ENCODE measurements at regions of chr7 and their contacts with region 1.

Region 1: DNA sequence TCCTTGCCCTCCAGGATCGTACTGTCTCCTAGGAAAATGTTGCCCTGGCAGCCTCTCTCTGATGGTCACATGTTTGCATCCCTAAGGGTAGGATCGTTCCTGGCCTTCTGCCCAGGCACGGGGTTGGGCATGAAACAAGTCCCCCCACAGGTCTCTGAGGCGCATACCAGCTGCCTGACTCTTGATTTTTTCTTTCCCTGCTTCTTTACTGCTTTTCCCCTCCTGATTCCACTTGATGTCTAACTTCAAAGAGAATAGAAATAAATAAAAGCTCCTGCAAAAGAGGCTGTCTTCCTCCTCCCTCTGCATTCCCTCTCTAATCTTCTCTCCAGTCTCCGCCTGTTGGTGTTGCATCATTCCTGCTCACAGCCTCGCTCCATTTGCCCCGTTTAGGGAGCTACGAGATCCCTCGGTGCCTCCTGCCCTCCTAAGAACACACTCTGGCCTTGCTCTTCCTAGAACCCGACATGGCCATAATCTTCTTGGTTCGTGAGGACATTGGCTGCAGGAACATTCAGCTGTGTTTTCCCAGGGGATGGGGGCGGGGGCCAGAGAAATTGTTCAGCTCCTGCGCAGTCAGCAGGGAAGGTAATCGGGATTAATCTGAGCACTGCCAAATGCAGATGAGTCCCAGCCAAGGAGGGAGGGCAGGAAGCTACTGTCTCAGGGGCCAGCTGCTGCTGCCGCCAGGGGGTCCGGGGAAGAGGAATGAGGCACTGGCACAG is 26.0 kb downstream of the LEP start:
- DNase-seq: peak; percentile 90
- H3K4me3 ChIP-seq: peak overlapping the region; percentile 30 to 33; a peak in 3 of 4 replicates
- H3K27ac ChIP-seq: peak overlapping the region; percentile 54 to 99
- H3K4me1 ChIP-seq: peaks cover 18 to 41% of the 10 kb centered on the region in 2 experiments; a peak in 3 of 4 replicates
- H3K27me3 ChIP-seq: no peaks in the 10 kb centered on the region
- CTCF ChIP-seq: peak; percentile 34
- EP300 ChIP-seq: peak; percentile 8 to 77; a peak in 3 of 4 replicates
- RAD21 ChIP-seq: peak; percentile 41

Region 2: DNA sequence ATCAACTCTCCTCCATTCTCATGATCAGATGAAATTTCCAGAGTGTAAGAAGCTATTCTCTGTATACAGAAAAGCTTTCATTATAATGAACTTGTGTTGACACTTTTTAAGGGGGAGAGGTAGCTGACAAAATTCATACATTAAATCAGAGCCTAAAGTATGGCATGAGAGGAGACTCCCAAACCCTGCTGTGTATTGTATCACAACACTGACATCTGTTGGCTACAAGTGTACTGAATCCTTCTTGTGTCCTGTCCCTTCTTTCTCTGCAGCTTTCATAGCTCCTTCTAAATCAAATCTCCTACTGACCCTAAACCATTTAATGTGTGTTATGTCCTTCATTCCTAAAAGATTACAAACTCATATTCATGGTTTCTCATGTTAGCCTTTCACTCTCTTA is 752.5 kb before region 1 on chr7:
- CTCF ChIA-PET with region 1: no interaction called
- POLR2A ChIA-PET with region 1: no interaction called
- DNase-seq: peak; percentile 68
- H3K4me3 ChIP-seq: no peak overlapping the region
- H3K27ac ChIP-seq: no peak overlapping the region
- H3K4me1 ChIP-seq: no peaks in the 10 kb centered on the region
- H3K27me3 ChIP-seq: no peaks in the 10 kb centered on the region
- CTCF ChIP-seq: peak; percentile 61
- EP300 ChIP-seq: no peak
- RAD21 ChIP-seq: peak; percentile 87

Region 3: DNA sequence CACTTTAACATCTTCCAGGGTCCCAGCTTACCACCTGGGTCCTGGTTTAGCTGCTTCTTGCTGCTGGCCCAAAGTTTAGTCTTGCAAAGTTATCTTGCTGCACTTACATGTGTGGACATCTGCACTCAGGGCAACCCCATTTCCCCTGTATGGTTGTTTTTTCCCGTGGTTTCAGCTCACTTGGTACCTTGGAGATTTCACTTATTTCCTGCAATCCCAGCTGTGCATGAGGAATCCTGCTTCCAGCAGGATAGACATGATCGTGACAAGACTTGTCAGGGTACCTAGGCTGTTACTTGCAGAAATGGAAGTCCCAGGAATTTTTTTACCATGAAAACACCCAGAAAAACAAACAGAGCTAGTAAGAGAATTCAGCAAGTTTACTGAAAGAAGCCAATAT is 121.9 kb before region 1 on chr7:
- CTCF ChIA-PET with region 1: no interaction called
- POLR2A ChIA-PET with region 1: no interaction called
- DNase-seq: no peak
- H3K4me3 ChIP-seq: no peak overlapping the region
- H3K27ac ChIP-seq: no peak overlapping the region
- H3K4me1 ChIP-seq: no peaks in the 10 kb centered on the region
- H3K27me3 ChIP-seq: peaks cover 10% of the 10 kb centered on the region; the same call in 1 of the 2 replicates
- CTCF ChIP-seq: no peak
- EP300 ChIP-seq: no peak
- RAD21 ChIP-seq: no peak

Region 4: GRCh38 chr7:128221929-128222403 is 45.1 kb before region 1 on chr7:
- CTCF ChIA-PET with region 1: interaction called, 10 read pairs
- POLR2A ChIA-PET with region 1: interaction called, 9 read pairs
- DNase-seq: peak; percentile 69
- H3K4me3 ChIP-seq: no peak overlapping the region
- H3K27ac ChIP-seq: peak overlapping the region in 1 of 2 experiments; percentile 35; a peak in 2 of 4 replicates
- H3K4me1 ChIP-seq: peaks cover 3 to 19% of the 10 kb centered on the region in 2 experiments; a peak in 2 of 4 replicates
- H3K27me3 ChIP-seq: no peaks in the 10 kb centered on the region
- CTCF ChIP-seq: no peak
- EP300 ChIP-seq: peak; percentile 41 to 72; a peak in 2 of 4 replicates
- RAD21 ChIP-seq: no peak